PC-3 (cell line): ENCODE measurements at regions of chr3 and their contacts with region 1.

Region 1: DNA sequence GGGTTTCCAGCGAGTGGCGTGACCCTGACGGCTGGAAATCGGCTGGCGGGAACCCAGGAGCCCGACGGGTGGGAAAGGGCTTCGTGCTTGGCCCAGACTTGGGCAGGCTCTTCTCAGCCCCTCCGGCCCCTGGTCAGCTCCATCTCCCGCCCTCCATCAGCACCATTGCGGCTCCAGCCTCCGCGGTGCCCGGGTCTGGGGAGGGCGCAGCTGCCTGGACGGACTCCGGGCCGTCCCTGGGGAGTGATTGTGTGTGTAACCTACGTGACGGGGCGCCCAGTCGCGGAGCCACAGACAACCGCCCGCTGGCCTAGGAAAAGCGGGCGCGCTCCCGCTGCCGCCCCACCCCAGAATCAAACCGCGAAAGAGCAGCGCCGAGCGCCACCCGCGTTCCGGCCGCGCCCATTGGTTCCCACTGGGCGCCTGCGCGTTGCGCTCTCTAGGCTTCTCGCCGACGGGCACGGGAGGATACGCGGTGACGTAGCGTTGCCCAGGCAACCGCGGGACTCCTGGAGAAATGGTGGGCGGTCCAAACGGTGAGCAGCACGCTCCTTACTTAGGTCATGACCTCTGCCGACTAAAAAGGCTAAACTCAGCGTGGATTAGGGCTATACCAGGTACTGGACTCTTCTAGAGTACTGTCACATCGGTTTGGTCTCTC is at the start of gene CFAP20DC:
- DNase-seq: peak; percentile 98
- ATAC-seq: peak; percentile 94
- H3K4me3 ChIP-seq: peak within 1 kb of the TSS; percentile 77
- H3K27ac ChIP-seq: peak within 1 kb of the TSS; percentile 64
- H3K4me1 ChIP-seq: peaks cover 34% of the 10 kb centered on the region
- H3K27me3 ChIP-seq: no peaks in the 10 kb centered on the region
- CTCF ChIP-seq: no peak
- total RNA-seq, gene CFAP20DC: 13.8 and 15.4 TPM in 2 replicates

Region 2: GRCh38 chr3:58560771-58561311 is 489.0 kb before region 1 on chr3:
- CTCF ChIA-PET with region 1: no interaction called
- POLR2A ChIA-PET with region 1: no interaction called
- intact Hi-C with region 1: loop called (anchors 5 kb)
- DNase-seq: peak; percentile 94
- ATAC-seq: peak; percentile 49
- H3K4me3 ChIP-seq: no peak overlapping the region
- H3K27ac ChIP-seq: peak overlapping the region; percentile 44
- H3K4me1 ChIP-seq: peaks cover 42% of the 10 kb centered on the region
- H3K27me3 ChIP-seq: no peaks in the 10 kb centered on the region
- CTCF ChIP-seq: peak; percentile 81

Region 3: DNA sequence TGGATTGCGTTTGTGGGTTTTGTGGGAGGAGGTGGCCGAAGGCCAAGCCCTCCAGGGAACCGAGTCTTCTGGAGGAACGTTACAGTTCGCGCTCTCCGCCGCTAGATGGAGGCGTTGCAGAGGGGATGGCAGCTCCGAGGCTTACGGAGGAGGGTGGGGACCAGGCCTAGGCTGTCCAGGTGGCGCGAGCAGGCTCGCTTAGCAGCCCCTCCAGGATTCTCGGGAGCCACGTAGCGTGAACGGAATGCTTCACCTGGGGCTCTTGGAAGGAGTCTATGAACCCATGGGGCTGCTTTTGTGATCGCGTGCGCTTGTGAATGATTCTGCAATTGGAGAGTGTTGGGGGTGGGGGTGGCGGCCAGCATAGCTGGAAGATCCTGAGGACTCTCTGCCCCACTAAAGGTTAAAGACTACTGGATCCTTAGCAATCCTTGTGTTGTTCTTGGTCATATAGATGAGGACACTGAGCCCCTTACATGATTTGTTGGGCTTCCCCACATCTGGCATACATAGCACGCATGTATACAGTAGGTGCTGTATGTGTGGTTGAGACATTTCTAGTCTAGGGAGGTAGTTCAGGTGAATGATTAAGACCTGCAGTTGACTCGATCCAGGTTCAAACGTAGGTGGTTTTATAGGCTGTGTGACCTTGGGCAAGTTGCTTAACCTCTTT is 409.0 kb before region 1 on chr3:
- CTCF ChIA-PET with region 1: interaction called, 5 read pairs
- POLR2A ChIA-PET with region 1: no interaction called
- intact Hi-C with region 1: loop called (anchors 1 kb)
- DNase-seq: peak; percentile 92
- ATAC-seq: peak; percentile 94
- H3K4me3 ChIP-seq: no peak overlapping the region
- H3K27ac ChIP-seq: no peak overlapping the region
- H3K4me1 ChIP-seq: peaks cover 22% of the 10 kb centered on the region
- H3K27me3 ChIP-seq: no peaks in the 10 kb centered on the region
- CTCF ChIP-seq: peak; percentile 96

Region 4: DNA sequence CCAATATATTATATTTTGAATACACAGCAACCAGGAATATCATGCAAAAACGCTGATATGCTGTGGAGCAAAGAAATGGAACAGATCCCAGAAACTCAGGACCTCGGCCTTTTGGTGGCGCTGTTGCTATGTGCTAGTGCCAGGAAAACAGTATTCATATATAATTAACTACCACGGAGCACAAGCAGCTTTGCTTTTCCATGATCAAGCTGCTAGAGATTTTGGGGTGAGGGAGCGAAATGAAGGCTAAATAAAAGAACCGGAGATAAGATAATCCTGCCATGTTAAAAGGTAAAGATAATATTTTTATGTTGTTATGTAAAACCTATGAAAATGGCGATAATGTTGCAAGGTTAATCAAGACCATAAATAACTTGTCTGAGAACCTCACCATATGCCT is 225.5 kb before region 1 on chr3:
- CTCF ChIA-PET with region 1: interaction called, 8 read pairs
- POLR2A ChIA-PET with region 1: no interaction called
- intact Hi-C with region 1: loop called (anchors 2 kb)
- DNase-seq: peak; percentile 81
- ATAC-seq: peak; percentile 81
- H3K4me3 ChIP-seq: no peak overlapping the region
- H3K27ac ChIP-seq: no peak overlapping the region
- H3K4me1 ChIP-seq: no peaks in the 10 kb centered on the region
- H3K27me3 ChIP-seq: no peaks in the 10 kb centered on the region
- CTCF ChIP-seq: peak; percentile 97

Region 5: DNA sequence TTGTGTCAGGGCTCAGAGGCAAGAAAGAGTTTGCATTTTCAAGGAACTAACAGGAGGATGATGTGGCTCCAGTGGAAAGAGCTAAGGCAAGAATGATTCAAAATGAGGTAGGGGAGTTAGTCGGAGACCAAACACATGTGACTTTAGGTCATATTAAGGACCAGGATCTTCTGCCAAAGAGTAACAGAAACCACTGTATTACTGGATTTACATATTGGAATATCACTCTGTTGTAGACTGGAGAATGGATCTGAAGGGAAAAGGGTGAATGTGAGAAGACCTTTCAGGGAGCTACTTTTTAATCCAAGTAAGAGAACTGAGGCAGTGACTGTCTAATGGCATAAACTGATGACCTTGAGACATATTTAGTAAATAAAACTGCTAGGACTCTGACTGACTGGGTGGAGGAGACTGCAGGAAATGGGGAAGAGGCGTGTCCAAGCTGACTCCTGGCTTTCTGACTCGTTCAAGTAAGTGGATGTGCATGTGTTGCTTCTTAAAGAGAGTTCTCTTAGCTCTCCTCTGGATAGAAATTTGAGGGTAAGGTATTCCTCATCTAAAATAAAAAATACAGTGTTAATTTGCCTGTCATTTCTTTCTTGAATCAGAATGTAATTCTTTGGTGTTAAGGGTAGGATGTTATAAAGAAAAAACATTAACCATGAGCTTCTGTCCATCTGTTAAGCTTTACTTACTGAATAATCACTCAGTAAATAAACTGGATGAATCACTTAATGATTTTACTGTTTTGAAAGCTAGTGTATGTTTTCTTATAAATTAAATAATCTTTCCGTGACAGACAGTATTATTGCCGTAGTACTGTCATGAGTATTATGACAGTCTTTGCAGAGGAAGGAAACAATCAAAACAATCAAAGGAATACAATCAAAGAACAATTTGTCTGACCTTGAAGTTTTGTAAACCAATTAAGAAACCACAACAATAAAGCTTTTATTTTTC is 58.3 kb after region 1 on chr3:
- CTCF ChIA-PET with region 1: interaction called, 10 read pairs
- POLR2A ChIA-PET with region 1: no interaction called
- intact Hi-C with region 1: loop called (anchors 2 kb)
- DNase-seq: peak; percentile 67
- ATAC-seq: peak; percentile 82
- H3K4me3 ChIP-seq: peak overlapping the region; percentile 8; the same call in 1 of the 2 replicates
- H3K27ac ChIP-seq: peak overlapping the region; percentile 72
- H3K4me1 ChIP-seq: peaks cover 36% of the 10 kb centered on the region
- H3K27me3 ChIP-seq: no peaks in the 10 kb centered on the region
- CTCF ChIP-seq: no peak